H1 (cell line): ENCODE measurements at regions of chr21 and their contacts with region 1.

Region 1: DNA sequence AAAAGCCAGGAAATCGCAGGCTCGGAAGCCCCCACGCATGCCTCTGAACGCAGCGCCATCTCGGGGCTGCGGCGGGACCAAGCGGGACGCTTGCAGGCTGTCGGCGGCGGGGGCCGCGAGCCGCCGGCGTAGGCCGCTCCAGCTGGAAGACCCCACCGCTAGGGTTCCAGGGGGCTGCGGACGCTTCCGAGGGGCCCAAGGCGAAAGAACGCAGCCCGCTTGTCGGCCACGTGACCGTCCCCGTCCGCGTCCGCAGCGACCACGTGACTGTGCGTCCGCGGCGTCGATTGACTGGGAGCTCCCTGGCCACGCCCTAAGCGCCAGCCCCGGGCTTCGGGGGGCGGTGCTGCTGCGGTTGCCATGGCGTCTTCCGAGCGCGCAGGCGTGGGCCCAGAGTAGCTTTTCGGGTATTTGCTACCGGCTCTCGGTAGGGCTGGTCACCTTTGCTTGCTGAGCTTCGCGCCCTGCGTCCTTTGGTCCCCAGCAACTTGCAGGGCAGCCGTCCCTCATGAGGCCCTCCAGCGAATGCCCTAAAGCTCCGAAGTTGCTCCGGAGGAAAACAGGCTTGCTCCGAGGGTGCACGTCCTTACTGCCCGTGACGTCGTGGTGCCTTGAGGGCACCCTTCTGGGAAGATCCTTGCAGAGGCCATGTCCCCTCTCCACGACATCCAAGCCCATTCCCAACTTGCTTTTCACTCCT is 197.2 kb downstream of the DYRK1A start:
- DNase-seq: peak; percentile 85 to 87
- H3K4me3 ChIP-seq: peak overlapping the region in 3 of 4 experiments; percentile 10 to 47 (median 17); a peak in 5 of 8 replicates
- H3K27ac ChIP-seq: no peak overlapping the region
- H3K4me1 ChIP-seq: peaks cover 4 to 16% (median 12%) of the 10 kb centered on the region in 4 experiments
- H3K27me3 ChIP-seq: peaks cover 0 to 7% (median 3%) of the 10 kb centered on the region in 4 experiments; a peak in 5 of 7 replicates
- CTCF ChIP-seq: peak in 1 of 3 experiments; percentile 12; a peak in 1 of 4 replicates
- EP300 ChIP-seq: no peak
- POLR2A ChIP-seq: peak in 1 of 2 experiments; percentile 53; a peak in 1 of 3 replicates
- RAD21 ChIP-seq: no peak; a peak in 1 of 4 replicates

Region 2: DNA sequence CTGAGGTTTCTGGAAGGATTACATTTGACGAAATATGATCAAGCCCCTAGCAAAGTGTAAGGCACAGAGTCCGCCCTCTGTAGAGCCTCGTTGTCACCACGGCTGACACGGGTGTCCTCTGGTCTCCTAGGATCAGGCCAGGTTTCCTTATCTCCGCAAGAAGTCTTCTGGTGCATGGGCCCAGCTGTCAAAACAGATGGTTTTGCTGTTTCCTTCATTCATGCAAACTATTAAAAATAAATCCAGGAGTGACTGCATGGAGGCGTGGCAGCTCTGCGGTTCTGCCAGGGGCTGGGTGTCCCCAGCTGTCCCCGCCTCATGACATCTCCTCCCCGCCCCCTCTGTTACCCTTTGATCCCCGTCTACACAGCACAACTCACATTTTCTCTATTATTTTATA is 11.8 kb after region 1 on chr21:
- CTCF ChIA-PET with region 1: no interaction called
- POLR2A ChIA-PET with region 1: interaction called, 22 read pairs
- DNase-seq: no peak
- H3K4me3 ChIP-seq: no peak overlapping the region
- H3K27ac ChIP-seq: no peak overlapping the region
- H3K4me1 ChIP-seq: no peaks in the 10 kb centered on the region
- H3K27me3 ChIP-seq: no peaks in the 10 kb centered on the region
- CTCF ChIP-seq: no peak
- EP300 ChIP-seq: no peak
- POLR2A ChIP-seq: no peak
- RAD21 ChIP-seq: no peak

Region 3: DNA sequence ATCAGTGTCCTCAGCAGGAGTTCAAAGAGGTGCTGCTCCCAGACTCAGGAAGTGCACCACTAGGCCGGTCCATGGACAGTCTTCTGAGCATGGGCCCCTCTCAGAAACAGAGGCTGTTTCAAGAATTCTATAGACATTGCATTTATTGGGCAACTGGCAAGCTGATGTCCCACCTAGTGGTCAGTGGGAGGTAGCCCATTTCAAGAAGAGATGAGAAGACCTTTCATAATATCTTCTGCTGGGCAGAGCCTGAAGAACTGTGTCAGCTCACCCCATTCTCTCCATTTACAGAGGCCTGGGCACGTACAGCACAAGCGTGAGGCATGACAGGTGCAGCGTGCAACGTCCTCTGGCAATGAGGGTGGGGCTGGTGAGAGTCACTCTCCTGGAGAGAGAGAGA is 18.8 kb after region 1 on chr21:
- CTCF ChIA-PET with region 1: interaction called, 10 read pairs
- POLR2A ChIA-PET with region 1: interaction called, 22 read pairs
- DNase-seq: no peak
- H3K4me3 ChIP-seq: no peak overlapping the region
- H3K27ac ChIP-seq: no peak overlapping the region
- H3K4me1 ChIP-seq: peaks cover 0 to 2% (median 0%) of the 10 kb centered on the region in 4 experiments; a peak in 1 of 7 replicates
- H3K27me3 ChIP-seq: no peaks in the 10 kb centered on the region
- CTCF ChIP-seq: peak in 2 of 3 experiments; percentile 52 to 66; a peak in 3 of 4 replicates
- EP300 ChIP-seq: no peak
- POLR2A ChIP-seq: no peak
- RAD21 ChIP-seq: peak; percentile 71 to 80

Region 4: GRCh38 chr21:37593015-37593414 is 29.2 kb after region 1 on chr21:
- CTCF ChIA-PET with region 1: no interaction called
- POLR2A ChIA-PET with region 1: interaction called, 26 read pairs
- DNase-seq: peak; percentile 84 to 90
- H3K4me3 ChIP-seq: peak overlapping the region in 1 of 4 experiments; percentile 51; a peak in 2 of 8 replicates
- H3K27ac ChIP-seq: no peak overlapping the region
- H3K4me1 ChIP-seq: peaks cover 8 to 23% (median 18%) of the 10 kb centered on the region in 4 experiments
- H3K27me3 ChIP-seq: no peaks in the 10 kb centered on the region
- CTCF ChIP-seq: no peak
- EP300 ChIP-seq: peak; percentile 13 to 79; a peak in 2 of 3 replicates
- POLR2A ChIP-seq: no peak
- RAD21 ChIP-seq: peak in 1 of 2 experiments; percentile 16; a peak in 1 of 4 replicates